Posterior cingulate gyrus (tissue), 11 donors: ENCODE measurements at regions of chr13 and their contacts with region 1.

Region 1: GRCh38 chr13:26221721-26222519 is at the start of gene RNF6:
- DNase-seq: peak; percentile 83 to 98 (median 93)

Region 2: GRCh38 chr13:26112843-26113242 is 109.1 kb before region 1 on chr13:
- intact Hi-C with region 1: no loop called
- DNase-seq: no peak

Region 3: GRCh38 chr13:26253787-26254582 is 32.1 kb after region 1 on chr13 and contains the start of gene CDK8:
- intact Hi-C with region 1: loop called (anchors 2 kb)
- DNase-seq: peak; percentile 84 to 98 (median 90)